ENCODE measurements at regions of chr6 and their contacts with region 1.

Region 1: GRCh38 chr6:127933852-127934840 is 33.3 kb upstream of the THEMIS start:
- DNase-seq: no peak
- ATAC-seq: peak; percentile 95
- H3K4me3 Mint-ChIP-seq: peak overlapping the region; percentile 73
- H3K27ac Mint-ChIP-seq: peak overlapping the region; percentile 93
- H3K4me1 Mint-ChIP-seq: peaks cover 47% of the 10 kb centered on the region
- H3K27me3 Mint-ChIP-seq: no peaks in the 10 kb centered on the region

Region 2: DNA sequence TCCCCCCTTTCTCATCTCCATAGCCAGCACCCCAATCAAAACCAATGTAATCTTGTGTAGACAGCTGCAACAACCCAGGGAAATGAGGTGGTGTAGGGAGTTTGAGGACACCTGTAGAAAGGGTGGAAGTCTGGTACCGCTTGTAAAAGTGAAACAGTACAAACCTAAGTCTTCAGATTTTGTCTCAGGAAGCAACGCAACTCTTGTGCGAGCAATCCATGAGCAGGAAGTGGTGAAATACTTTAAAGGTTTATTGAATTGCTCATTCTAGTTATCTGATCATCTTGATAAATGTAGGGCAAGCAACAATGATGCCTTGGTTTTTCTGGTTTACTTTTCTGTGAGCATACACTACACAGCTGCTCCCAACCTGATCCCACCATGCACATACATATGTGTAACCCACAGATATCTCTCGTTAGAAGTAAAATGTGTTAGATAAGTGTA is 37.8 kb after region 1 on chr6:
- POLR2A ChIA-PET with region 1: interaction called, 32 read pairs
- DNase-seq: no peak
- ATAC-seq: peak; percentile 71
- H3K4me3 Mint-ChIP-seq: peak overlapping the region; percentile 88
- H3K27ac Mint-ChIP-seq: peak overlapping the region; percentile 97
- H3K4me1 Mint-ChIP-seq: peaks cover 61% of the 10 kb centered on the region
- H3K27me3 Mint-ChIP-seq: no peaks in the 10 kb centered on the region